Activated naive CD4-positive, alpha-beta T cell treated with anti-CD3 and anti-CD28 coated beads for 36 hours (primary cell): ENCODE measurements at regions of chr2 and their contacts with region 1.

Region 1: GRCh38 chr2:9843229-9844035 is at the start of gene TAF1B:
- DNase-seq: peak; percentile 89
- H3K4me3 Mint-ChIP-seq: peak within 1 kb of the TSS; percentile 93
- H3K27ac Mint-ChIP-seq: peak within 1 kb of the TSS; percentile 88
- H3K4me1 Mint-ChIP-seq: peaks cover 35% of the 10 kb centered on the region
- H3K27me3 Mint-ChIP-seq: no peaks in the 10 kb centered on the region
- total RNA-seq, gene TAF1B: 24.8 to 25.7 TPM

Region 2: GRCh38 chr2:9423100-9423921 is 420.1 kb before region 1 on chr2 and contains the starts of genes CPSF3 and ITGB1BP1:
- CTCF ChIA-PET with region 1: no interaction called
- intact Hi-C with region 1: loop called (anchors 1 kb)
- DNase-seq: peak; percentile 97
- H3K4me3 Mint-ChIP-seq: no peak within 1 kb of the TSS
- H3K27ac Mint-ChIP-seq: peak within 1 kb of the TSS; percentile 92
- H3K4me1 Mint-ChIP-seq: peaks cover 39% of the 10 kb centered on the region
- H3K27me3 Mint-ChIP-seq: no peaks in the 10 kb centered on the region
- total RNA-seq, gene CPSF3: 64.5 to 65.7 TPM
- total RNA-seq, gene ITGB1BP1: 97.2 to 97.4 TPM

Region 3: DNA sequence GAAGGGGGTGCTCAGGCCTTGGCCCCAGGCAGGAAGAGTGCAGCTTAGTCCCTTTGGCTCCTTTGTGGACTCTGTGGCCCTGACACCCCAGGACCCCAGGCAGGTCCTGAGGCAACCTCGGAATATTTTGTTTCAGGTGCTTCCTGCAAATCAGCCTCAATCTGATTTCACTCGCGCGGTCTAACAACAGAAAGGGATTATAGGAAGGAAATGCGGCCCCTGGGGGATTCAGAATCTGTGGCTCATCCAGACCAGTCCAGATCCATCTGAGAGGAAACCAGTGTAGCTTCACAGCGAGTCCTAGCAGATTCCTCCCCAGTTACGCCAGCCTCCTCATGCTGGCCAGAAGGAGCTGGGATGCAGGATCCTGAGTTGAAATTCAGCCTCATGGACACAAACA is 153.2 kb before region 1 on chr2:
- CTCF ChIA-PET with region 1: no interaction called
- intact Hi-C with region 1: no loop called
- DNase-seq: no peak
- H3K4me3 Mint-ChIP-seq: no peak overlapping the region
- H3K27ac Mint-ChIP-seq: no peak overlapping the region
- H3K4me1 Mint-ChIP-seq: no peaks in the 10 kb centered on the region
- H3K27me3 Mint-ChIP-seq: no peaks in the 10 kb centered on the region

Region 4: DNA sequence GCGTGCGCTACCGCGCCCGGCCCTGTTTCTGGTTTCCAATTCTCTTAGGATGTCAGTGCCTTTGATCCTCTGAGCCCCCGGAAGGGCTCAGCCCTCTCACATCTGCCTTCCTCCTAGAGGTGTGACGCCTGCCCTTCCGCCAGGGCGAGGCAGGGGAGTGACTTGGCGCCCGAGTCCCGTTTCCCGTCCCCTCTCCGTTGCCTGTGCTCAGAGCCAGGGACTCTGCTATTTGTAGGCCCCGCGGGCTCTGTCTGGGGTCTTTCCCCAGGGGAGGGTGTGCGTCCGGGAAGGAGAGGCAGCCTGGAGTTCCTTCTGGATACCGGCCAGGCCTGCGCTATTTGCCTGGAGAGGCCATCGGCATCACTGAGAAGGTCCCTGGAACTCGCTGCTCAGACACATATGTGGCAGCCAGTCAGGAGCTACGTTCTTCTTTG is 103.9 kb before region 1 on chr2:
- CTCF ChIA-PET with region 1: no interaction called
- intact Hi-C with region 1: loop called (anchors 5 kb)
- DNase-seq: peak; percentile 75
- H3K4me3 Mint-ChIP-seq: peak overlapping the region; percentile 65
- H3K27ac Mint-ChIP-seq: peak overlapping the region; percentile 80
- H3K4me1 Mint-ChIP-seq: peaks cover 45% of the 10 kb centered on the region
- H3K27me3 Mint-ChIP-seq: no peaks in the 10 kb centered on the region

Region 5: DNA sequence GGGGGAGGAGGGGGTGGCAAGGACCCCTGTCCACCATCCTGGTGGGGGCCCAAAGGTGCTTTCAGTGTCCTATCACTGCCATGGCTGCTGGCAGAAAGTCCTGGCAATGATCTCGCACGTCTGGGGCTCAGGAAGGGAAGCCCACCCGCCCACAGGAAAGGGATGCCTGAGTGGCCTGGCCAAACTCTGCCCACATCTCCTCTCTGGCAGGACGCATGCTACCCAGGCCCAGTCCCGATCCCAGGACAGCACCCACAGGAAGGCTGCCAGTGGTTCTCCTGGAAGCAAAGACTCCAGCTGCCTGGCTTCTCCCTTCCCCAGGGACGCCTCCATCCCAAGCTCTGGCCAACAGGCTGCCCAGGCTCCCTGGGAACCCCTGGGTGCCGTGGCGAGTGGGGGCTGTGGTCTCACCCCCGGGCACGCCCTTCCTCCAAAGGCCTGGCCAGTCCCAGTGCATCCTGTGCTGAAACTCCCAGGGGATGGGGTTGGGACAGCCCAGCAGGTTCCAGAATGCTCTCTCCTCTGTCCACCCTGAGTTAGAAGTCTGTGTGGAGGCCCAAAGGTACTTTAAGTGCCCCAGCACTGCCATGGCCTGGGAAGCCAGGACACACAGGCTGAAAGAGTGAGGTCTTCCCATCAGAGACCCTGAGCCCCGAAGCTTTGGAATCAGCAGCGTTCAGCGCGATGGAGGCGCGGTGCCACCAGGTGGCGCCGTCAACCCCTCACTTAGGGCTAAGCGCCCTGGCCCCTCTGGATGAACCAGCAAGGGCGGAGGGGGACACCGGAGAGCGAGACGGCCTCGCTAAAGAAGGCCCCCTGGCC is 29.9 kb before region 1 on chr2:
- CTCF ChIA-PET with region 1: interaction called, 28 read pairs
- intact Hi-C with region 1: no loop called
- DNase-seq: peak; percentile 75
- H3K4me3 Mint-ChIP-seq: no peak overlapping the region
- H3K27ac Mint-ChIP-seq: no peak overlapping the region
- H3K4me1 Mint-ChIP-seq: peaks cover 12% of the 10 kb centered on the region
- H3K27me3 Mint-ChIP-seq: no peaks in the 10 kb centered on the region

Region 6: GRCh38 chr2:9919512-9919911 is 76.1 kb after region 1 on chr2:
- CTCF ChIA-PET with region 1: no interaction called
- intact Hi-C with region 1: no loop called
- DNase-seq: no peak
- H3K4me3 Mint-ChIP-seq: no peak overlapping the region
- H3K27ac Mint-ChIP-seq: no peak overlapping the region
- H3K4me1 Mint-ChIP-seq: peaks cover 3% of the 10 kb centered on the region
- H3K27me3 Mint-ChIP-seq: no peaks in the 10 kb centered on the region

Region 7: DNA sequence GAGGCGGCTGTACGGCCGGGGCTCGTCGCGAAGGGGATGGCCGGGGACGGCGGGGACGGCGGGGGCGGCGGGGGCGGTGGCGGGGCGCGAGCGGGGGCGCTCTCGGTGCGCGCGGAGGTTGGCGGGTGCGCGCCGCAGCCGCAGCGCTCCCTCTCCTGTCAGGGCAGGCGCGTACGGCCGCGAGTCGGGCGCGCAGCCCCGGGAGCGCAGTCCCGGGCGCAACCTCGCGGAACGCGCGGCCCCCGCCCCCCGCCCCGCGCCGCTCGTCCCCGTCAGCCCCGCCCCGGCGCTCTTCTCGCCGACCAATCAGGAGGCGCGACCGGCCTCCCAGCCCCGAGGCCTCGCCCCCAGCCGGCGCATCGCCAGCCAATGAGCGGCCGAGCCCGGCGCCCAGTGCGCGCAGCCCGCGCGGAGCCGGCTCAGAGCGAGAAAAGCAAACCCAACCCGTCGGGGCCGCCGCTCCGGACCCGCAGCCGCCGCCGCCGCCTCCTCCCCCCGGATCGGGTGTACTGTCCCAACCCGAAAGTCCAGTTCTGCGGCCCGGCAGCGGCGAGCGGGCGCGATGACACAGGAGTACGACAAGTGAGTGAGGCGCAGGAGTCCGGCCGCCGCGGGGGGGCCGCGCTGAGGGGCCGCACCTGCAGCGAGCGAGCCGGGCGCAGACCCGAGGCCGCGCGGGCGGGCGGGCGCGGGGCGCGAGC is 108.0 kb after region 1 on chr2 and contains the start of gene GRHL1:
- CTCF ChIA-PET with region 1: no interaction called
- intact Hi-C with region 1: loop called (anchors 1 kb)
- DNase-seq: peak; percentile 88
- H3K4me3 Mint-ChIP-seq: peak within 1 kb of the TSS; percentile 75
- H3K27ac Mint-ChIP-seq: no peak within 1 kb of the TSS
- H3K4me1 Mint-ChIP-seq: peaks cover 2% of the 10 kb centered on the region
- H3K27me3 Mint-ChIP-seq: peaks cover 32% of the 10 kb centered on the region
- total RNA-seq, gene GRHL1: 0.69 to 0.79 TPM

Region 8: DNA sequence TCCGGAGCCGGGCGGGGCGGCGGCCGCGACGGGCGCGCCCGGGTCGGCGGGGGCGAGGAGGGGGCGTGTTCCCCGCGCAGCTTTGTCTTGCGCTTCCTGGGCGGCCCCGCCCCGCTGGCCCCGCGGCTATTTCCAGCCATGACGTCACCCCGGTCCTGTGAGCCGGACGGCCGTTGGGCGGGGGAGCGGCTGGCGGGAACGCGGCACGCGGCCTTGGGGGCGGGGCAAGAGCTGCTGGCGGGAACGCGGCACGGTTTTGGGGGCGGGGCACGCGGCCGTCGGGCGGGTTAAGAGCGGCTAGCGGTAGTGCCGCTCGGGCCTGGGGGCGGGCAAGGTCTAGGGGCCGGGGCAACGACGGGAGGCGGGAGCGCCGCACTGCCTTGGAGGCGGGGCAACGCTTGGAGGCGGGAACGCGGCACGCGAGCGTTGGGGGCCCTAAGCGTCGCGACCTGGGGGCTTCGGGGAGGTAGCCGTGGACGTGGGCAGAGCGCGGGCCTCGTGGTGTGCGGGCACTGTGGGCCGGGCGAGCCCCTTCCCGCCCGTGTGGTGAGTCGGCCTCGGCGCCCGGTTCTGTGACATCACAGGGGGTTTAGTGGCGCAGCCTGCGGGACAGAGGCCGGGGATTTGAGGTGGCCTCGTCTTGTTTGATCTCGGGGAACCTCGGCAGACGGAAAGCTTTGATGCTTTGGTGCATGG is 200.6 kb after region 1 on chr2:
- CTCF ChIA-PET with region 1: interaction called, 5 read pairs
- intact Hi-C with region 1: loop called (anchors 1 kb)
- DNase-seq: peak; percentile 87
- H3K4me3 Mint-ChIP-seq: peak overlapping the region; percentile 59
- H3K27ac Mint-ChIP-seq: peak overlapping the region; percentile 33
- H3K4me1 Mint-ChIP-seq: peaks cover 15% of the 10 kb centered on the region
- H3K27me3 Mint-ChIP-seq: peaks cover 3% of the 10 kb centered on the region